ENCODE measurements at regions of chr5 and their contacts with region 1.

Region 1: GRCh38 chr5:84274585-84275468 is 109.9 kb downstream of the EDIL3 start:
- ATAC-seq: peak in 1 of 8 experiments; percentile 19
- H3K4me3 ChIP-seq: no peak overlapping the region
- H3K27ac ChIP-seq: no peak overlapping the region
- H3K4me1 ChIP-seq: peaks cover 0 to 6% of the 10 kb centered on the region in 2 donors

Region 2: GRCh38 chr5:83718195-83718825 is 556.5 kb before region 1 on chr5:
- in situ Hi-C with region 1: loop called in 1 of 9 experiments (anchors 25 kb)
- ATAC-seq: peak; percentile 22 to 44 (median 37)
- H3K4me3 ChIP-seq: no peak overlapping the region
- H3K27ac ChIP-seq: no peak overlapping the region
- H3K4me1 ChIP-seq: peaks cover 0 to 9% of the 10 kb centered on the region in 2 donors

Region 3: DNA sequence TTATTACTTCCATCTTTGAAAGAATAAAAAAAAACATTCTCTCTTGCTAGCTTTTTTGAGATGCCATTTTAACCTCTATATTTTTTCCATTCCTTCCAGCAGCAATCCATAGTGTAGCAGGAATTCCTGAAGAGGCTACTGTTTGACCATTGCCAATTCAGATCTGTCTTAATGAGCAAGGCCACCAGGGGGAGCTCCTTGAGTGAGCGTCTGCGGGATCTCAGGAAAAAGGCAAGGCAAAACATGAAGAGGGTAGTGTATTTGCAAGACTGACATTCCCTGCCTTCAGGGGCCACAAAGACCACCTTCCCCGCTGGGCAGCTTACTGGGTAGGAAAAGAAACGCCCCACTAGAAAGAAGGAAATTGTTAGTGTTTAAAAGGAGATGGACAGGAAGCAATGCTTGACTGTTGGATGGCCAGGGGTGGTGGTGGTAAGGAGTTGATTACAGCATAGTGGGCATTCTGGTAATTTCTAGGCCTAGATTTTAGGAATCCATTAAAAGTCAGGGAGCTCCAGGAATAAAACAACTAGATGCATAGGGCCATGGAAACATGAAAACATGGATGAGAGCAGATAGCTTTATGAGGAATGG is 347.6 kb before region 1 on chr5:
- in situ Hi-C with region 1: loop called in 1 of 9 experiments (anchors 25 kb)
- ATAC-seq: peak in 5 of 8 experiments; percentile 41 to 67 (median 64)
- H3K4me3 ChIP-seq: no peak overlapping the region
- H3K27ac ChIP-seq: no peak overlapping the region
- H3K4me1 ChIP-seq: peaks cover 6 to 14% of the 10 kb centered on the region in 2 donors